ENCODE measurements at regions of chr1 and their contacts with region 1.

Region 1: GRCh38 chr1:203558064-203558760 is 64.3 kb downstream of the OPTC start:
- DNase-seq: peak; percentile 63 to 96
- H3K4me3 ChIP-seq: no peak overlapping the region
- H3K27ac ChIP-seq: peak overlapping the region; percentile 95 to 99
- H3K4me1 ChIP-seq: peaks cover 29 to 49% of the 10 kb centered on the region in 2 donors
- H3K27me3 ChIP-seq: no peaks in the 10 kb centered on the region
- CTCF ChIP-seq: no peak

Region 2: DNA sequence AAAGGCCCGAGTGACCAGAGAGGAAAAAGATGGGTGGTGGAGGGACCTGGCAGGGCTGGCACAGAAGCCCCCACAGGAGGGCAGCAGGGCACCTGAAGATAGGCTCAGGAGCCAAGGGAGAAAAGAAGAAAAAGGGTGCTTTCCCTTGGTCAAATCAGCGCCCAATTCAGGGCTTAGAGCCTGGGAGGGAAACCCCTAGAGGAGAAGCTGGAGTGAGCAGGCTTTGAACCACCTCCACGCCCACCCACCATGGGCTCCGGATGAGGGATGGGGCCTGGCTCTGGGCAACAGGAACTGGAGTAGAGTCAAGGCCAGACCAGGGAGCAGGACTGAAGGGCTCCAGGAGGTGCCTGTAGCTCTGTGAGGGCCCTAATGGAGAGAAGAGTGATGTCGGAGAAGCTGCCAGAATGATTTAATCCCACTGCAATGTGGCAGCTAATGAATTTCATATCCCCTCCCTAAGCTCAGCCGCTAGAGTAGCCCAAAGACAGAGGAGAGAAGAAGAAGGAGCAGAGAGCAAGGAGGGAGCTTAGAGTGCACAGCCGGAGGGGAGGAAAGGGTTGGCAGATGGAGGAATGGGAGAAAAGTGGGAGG is 94.6 kb before region 1 on chr1:
- intact Hi-C with region 1: loop called (anchors 5 kb)
- DNase-seq: peak in 1 of 2 donors; percentile 79
- H3K4me3 ChIP-seq: peak overlapping the region in 1 of 2 donors; percentile 28
- H3K27ac ChIP-seq: peak overlapping the region; percentile 90 to 91
- H3K4me1 ChIP-seq: peaks cover 43 to 62% of the 10 kb centered on the region in 2 donors
- H3K27me3 ChIP-seq: no peaks in the 10 kb centered on the region
- CTCF ChIP-seq: peak in 1 of 3 experiments; percentile 24

Region 3: GRCh38 chr1:203520315-203520714 is 37.9 kb before region 1 on chr1:
- intact Hi-C with region 1: loop called (anchors 5 kb)
- DNase-seq: peak in 1 of 2 donors; percentile 76
- H3K4me3 ChIP-seq: no peak overlapping the region
- H3K27ac ChIP-seq: no peak overlapping the region
- H3K4me1 ChIP-seq: peaks cover 4 to 35% of the 10 kb centered on the region in 2 donors
- H3K27me3 ChIP-seq: no peaks in the 10 kb centered on the region
- CTCF ChIP-seq: no peak

Region 4: GRCh38 chr1:203625628-203626019 is 67.4 kb after region 1 on chr1:
- intact Hi-C with region 1: loop called (anchors 1 kb)
- DNase-seq: no peak
- H3K4me3 ChIP-seq: peak overlapping the region; percentile 72 to 81
- H3K27ac ChIP-seq: peak overlapping the region in 1 of 2 donors; percentile 87
- H3K4me1 ChIP-seq: peaks cover 4 to 15% of the 10 kb centered on the region in 2 donors
- H3K27me3 ChIP-seq: no peaks in the 10 kb centered on the region
- CTCF ChIP-seq: peak in 2 of 3 experiments; percentile 14 to 37

Region 5: DNA sequence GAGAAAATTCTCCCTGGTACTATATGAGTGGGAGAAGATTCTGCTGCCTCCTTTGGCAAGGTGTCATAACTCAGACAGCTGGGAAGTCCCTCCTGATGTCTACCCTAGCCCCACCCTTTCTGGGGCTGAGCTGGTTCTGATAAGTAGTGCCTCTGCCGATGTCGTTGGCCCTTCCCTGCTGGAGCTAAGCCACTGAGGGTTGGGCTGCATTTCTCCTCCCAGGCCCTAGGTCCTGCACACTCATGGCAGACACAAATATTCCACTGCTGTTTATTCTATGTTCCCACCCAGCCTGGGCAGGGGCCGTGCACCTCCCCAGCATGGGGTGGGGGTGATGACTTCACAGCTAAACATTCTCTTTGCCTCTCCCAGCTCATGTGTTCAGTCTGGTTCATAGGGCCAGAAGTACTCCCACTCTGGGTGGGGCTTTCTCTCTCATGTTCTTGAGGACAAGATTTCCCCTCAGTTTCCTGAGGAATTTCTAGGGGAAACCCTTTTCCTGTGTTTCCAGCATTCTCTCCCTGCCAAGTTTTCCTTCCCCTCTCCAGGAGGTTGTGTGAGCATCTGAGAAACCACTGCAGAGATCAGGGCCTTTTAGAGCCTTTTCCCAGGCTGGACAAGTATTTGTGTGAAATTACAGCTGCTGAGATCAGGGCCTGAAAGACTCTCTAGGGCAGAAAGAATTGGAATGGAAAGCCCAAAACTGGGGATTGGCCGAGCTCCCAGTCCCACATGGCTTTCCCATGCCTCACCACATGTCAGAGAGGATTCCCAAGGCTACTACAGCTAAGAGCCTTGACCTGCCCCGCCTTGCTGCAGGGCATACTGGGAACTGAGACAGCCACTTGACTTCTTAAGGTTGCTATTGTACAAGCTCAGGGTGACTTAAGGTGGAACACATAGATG is 134.6 kb after region 1 on chr1:
- intact Hi-C with region 1: loop called (anchors 2 kb)
- DNase-seq: peak; percentile 76 to 96
- H3K4me3 ChIP-seq: no peak overlapping the region
- H3K27ac ChIP-seq: peak overlapping the region; percentile 82 to 87
- H3K4me1 ChIP-seq: peaks cover 17 to 38% of the 10 kb centered on the region in 2 donors
- H3K27me3 ChIP-seq: no peaks in the 10 kb centered on the region
- CTCF ChIP-seq: no peak